ENCODE measurements at regions of chr11 and their contacts with region 1.

Region 1: GRCh38 chr11:69918938-69919650 is 99.9 kb upstream of the FGF3 start:
- DNase-seq: peak; percentile 78 to 90 (median 86)
- H3K4me3 ChIP-seq: no peak overlapping the region
- H3K27ac ChIP-seq: no peak overlapping the region
- H3K4me1 ChIP-seq: peaks cover 12% of the 10 kb centered on the region
- H3K27me3 ChIP-seq: no peaks in the 10 kb centered on the region
- CTCF ChIP-seq: peak; percentile 88 to 100 (median 91)
- EP300 ChIP-seq: no peak
- POLR2A ChIP-seq: no peak

Region 2: DNA sequence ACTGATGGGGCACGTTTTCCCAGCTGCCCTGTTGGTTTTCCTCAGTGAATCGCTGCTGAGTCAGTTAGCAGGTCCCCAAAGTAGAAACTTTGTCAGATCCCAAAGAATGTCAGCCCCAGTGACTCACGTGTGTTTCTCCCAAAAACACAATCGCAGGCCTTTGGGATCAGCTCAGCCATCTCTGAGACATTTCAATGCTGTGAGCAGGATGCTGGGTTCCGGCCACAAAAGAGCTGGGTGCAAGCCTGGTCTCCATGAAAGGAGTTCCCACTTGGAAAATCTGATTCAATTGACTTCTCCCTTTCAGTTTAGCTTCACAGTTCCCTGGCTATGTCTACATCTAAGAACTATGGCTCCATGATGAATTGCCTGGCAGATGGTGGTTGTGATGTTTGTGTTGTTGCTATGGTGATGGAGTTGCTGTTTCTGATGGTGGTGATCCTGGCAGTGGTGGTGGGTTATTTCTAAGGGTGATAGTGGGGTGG is 597.2 kb before region 1 on chr11:
- intact Hi-C with region 1: no loop called
- DNase-seq: no peak
- H3K4me3 ChIP-seq: no peak overlapping the region
- H3K27ac ChIP-seq: no peak overlapping the region
- H3K4me1 ChIP-seq: no peaks in the 10 kb centered on the region
- H3K27me3 ChIP-seq: no peaks in the 10 kb centered on the region
- CTCF ChIP-seq: no peak
- EP300 ChIP-seq: no peak
- POLR2A ChIP-seq: no peak

Region 3: GRCh38 chr11:70076495-70077225 is 157.6 kb after region 1 on chr11:
- intact Hi-C with region 1: loop called in 1 of 4 experiments (anchors 2 kb)
- DNase-seq: peak in 1 of 5 donors; percentile 10
- H3K4me3 ChIP-seq: no peak overlapping the region
- H3K27ac ChIP-seq: no peak overlapping the region
- H3K4me1 ChIP-seq: no peaks in the 10 kb centered on the region
- H3K27me3 ChIP-seq: no peaks in the 10 kb centered on the region
- CTCF ChIP-seq: no peak
- EP300 ChIP-seq: no peak
- POLR2A ChIP-seq: no peak

Region 4: GRCh38 chr11:70467201-70468085 is 548.3 kb after region 1 on chr11:
- intact Hi-C with region 1: loop called in 2 of 4 experiments (anchors 10 kb)
- DNase-seq: peak; percentile 28 to 67 (median 49)
- H3K4me3 ChIP-seq: no peak overlapping the region
- H3K27ac ChIP-seq: no peak overlapping the region
- H3K4me1 ChIP-seq: no peaks in the 10 kb centered on the region
- H3K27me3 ChIP-seq: no peaks in the 10 kb centered on the region
- CTCF ChIP-seq: peak; percentile 51 to 59 (median 55)
- EP300 ChIP-seq: no peak
- POLR2A ChIP-seq: no peak

Measured in ovary (tissue), 10 donors.